Cardiac septum (tissue), 1 donor: ENCODE measurements at regions of chr3 and their contacts with region 1.

Region 1: DNA sequence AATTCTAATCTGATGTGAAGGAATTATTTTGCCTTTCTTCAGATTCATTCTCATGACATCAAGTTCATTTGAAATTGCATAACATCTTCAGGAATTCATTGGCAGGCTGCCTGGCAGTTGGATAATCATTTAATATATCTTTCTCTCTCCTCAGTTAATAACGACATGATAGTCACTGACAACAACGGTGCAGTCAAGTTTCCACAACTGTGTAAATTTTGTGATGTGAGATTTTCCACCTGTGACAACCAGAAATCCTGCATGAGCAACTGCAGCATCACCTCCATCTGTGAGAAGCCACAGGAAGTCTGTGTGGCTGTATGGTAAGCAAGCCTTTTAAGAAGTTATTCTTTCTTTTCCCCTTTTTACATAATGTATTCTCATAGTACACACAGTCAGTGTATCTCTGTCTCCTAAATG is 38.2 kb downstream of the TGFBR2 start:
- DNase-seq: no peak

Region 2: DNA sequence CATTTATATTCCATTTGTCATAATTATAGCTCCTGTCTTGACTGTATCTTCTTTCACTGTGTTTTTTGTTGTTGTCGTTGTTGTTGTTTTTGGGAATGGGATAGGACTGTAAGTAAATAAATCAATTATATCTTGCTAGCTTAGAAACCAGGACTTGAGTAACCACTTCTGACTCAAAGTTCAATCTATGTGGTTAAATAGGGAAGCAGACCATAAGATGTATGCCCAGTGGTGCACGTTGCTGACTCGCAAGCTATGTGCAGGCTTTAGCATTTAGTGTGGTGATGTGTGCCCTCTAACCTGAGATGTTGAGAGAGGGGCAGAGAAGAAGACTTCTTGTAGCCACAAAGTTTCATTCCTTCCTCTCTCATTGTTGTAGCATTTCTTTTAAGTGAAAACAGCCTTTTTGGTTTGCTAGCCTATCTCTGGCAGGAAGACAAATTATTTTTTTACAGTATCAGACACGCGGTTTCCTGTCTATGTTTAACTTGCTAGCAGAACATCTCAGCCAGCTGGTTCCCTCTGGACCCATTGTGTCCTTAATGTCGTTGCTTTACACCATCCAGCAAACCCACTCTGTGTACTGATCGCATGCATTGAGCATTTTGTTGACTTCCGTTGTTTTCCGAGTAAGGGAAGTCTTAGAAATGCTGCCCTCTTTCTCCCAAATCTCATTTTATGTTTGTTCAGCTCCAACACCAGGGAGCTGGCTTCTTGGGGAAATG is 13.9 kb after region 1 on chr3:
- intact Hi-C with region 1: loop called (anchors 2 kb)
- DNase-seq: no peak

Region 3: GRCh38 chr3:30760040-30760695 is 115.6 kb after region 1 on chr3:
- intact Hi-C with region 1: no loop called
- DNase-seq: no peak